Psoas muscle (tissue), 8 donors: ENCODE measurements at regions of chr9 and their contacts with region 1.

Region 1: DNA sequence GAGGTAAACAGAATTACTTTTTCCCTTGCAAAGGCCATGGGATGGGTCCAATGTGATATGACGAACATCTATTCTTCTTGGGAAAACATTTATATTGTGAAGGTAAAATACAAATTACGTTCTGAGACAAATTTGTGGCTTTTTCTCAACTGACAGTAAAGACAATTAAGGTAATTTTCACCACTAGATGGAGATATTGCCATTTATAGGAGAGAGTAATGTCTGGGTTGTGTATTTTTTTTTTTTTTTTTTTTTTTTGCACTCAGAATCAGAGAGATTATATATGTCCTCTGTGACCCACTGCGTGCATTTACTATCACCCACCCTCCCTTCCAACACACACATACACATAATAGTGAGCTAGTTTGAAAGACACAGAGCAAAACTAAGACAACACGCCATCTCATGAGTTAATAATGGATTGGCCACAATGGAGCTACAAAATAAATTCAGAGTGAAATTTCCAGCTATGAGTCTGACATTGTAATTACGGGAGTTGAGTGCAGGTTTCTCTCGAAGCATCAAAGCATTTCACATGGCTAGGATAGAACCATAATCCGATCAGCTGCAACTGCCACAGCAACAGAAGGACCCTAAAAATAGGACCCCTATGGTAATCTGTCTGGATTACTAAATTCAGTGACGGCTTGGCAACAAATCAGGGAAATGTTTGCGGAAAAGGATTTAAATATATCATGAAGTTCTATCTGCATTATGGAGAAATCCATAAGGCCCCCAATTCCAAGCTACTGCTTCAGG is 49.2 kb downstream of the ANXA1 start:
- DNase-seq: no peak
- ATAC-seq: no peak
- H3K4me3 ChIP-seq: no peak overlapping the region
- H3K27ac ChIP-seq: no peak overlapping the region
- H3K4me1 ChIP-seq: no peaks in the 10 kb centered on the region
- H3K27me3 ChIP-seq: no peaks in the 10 kb centered on the region
- CTCF ChIP-seq: peak; percentile 41

Region 2: GRCh38 chr9:74570879-74571512 is 1370.1 kb after region 1 on chr9:
- intact Hi-C with region 1: loop called in 1 of 2 experiments (anchors 10 kb)
- DNase-seq: no peak
- ATAC-seq: no peak
- H3K4me3 ChIP-seq: no peak overlapping the region
- H3K27ac ChIP-seq: no peak overlapping the region
- H3K4me1 ChIP-seq: no peaks in the 10 kb centered on the region
- H3K27me3 ChIP-seq: no peaks in the 10 kb centered on the region
- CTCF ChIP-seq: peak; percentile 61